CD8-positive, alpha-beta T cell (primary cell): ENCODE measurements at regions of chr19 and their contacts with region 1.

Region 1: GRCh38 chr19:6110360-6110977 is at the start of gene RFX2:
- DNase-seq: peak; percentile 98 to 99 (median 99)
- ATAC-seq: peak; percentile 97
- H3K4me3 ChIP-seq: peak within 1 kb of the TSS; percentile 59
- H3K4me3 Mint-ChIP-seq: peak within 1 kb of the TSS; percentile 89
- H3K27ac ChIP-seq: peak within 1 kb of the TSS; percentile 52 to 58
- H3K27ac Mint-ChIP-seq: peak within 1 kb of the TSS; percentile 80
- H3K4me1 ChIP-seq: peaks cover 14% of the 10 kb centered on the region
- H3K4me1 Mint-ChIP-seq: peaks cover 17% of the 10 kb centered on the region
- H3K27me3 ChIP-seq: peaks cover 0 to 13% of the 10 kb centered on the region in 2 experiments
- H3K27me3 Mint-ChIP-seq: peaks cover 3% of the 10 kb centered on the region
- CTCF ChIP-seq: no peak
- total RNA-seq, gene RFX2: 9.0 to 12.4 TPM

Region 2: GRCh38 chr19:5827891-5828660 is 282.4 kb before region 1 on chr19:
- CTCF ChIA-PET with region 1: no interaction called
- POLR2A ChIA-PET with region 1: no interaction called
- intact Hi-C with region 1: loop called in 1 of 2 experiments (anchors 1 kb)
- DNase-seq: peak; percentile 82 to 98 (median 90)
- ATAC-seq: peak; percentile 82
- H3K4me3 ChIP-seq: peak overlapping the region; percentile 56 to 70
- H3K4me3 Mint-ChIP-seq: peak overlapping the region; percentile 97
- H3K27ac ChIP-seq: peak overlapping the region; percentile 62 to 70
- H3K27ac Mint-ChIP-seq: peak overlapping the region; percentile 98
- H3K4me1 ChIP-seq: peaks cover 23% of the 10 kb centered on the region
- H3K4me1 Mint-ChIP-seq: peaks cover 15% of the 10 kb centered on the region
- H3K27me3 ChIP-seq: peaks cover 0 to 4% of the 10 kb centered on the region in 2 experiments
- H3K27me3 Mint-ChIP-seq: peaks cover 2% of the 10 kb centered on the region
- CTCF ChIP-seq: no peak

Region 3: GRCh38 chr19:5977785-5978605 is 132.5 kb before region 1 on chr19 and contains the start of gene RANBP3:
- CTCF ChIA-PET with region 1: no interaction called
- POLR2A ChIA-PET with region 1: no interaction called
- intact Hi-C with region 1: loop called in 1 of 2 experiments (anchors 2 kb)
- DNase-seq: peak; percentile 94 to 100 (median 99)
- ATAC-seq: peak; percentile 88
- H3K4me3 ChIP-seq: peak within 1 kb of the TSS; percentile 65 to 91
- H3K4me3 Mint-ChIP-seq: peak within 1 kb of the TSS; percentile 96
- H3K27ac ChIP-seq: peak within 1 kb of the TSS; percentile 83 to 85
- H3K27ac Mint-ChIP-seq: peak within 1 kb of the TSS; percentile 95
- H3K4me1 ChIP-seq: peaks cover 50% of the 10 kb centered on the region
- H3K4me1 Mint-ChIP-seq: peaks cover 56% of the 10 kb centered on the region
- H3K27me3 ChIP-seq: no peaks in the 10 kb centered on the region
- H3K27me3 Mint-ChIP-seq: no peaks in the 10 kb centered on the region
- CTCF ChIP-seq: no peak
- total RNA-seq, gene RANBP3: 109 to 118 TPM

Region 4: GRCh38 chr19:6056801-6057650 is 53.4 kb before region 1 on chr19:
- CTCF ChIA-PET with region 1: no interaction called
- POLR2A ChIA-PET with region 1: no interaction called
- intact Hi-C with region 1: loop called in 1 of 2 experiments (anchors 5 kb)
- DNase-seq: peak in 2 of 9 experiments; percentile 27 to 49
- ATAC-seq: no peak
- H3K4me3 ChIP-seq: no peak overlapping the region
- H3K4me3 Mint-ChIP-seq: no peak overlapping the region
- H3K27ac ChIP-seq: no peak overlapping the region
- H3K27ac Mint-ChIP-seq: no peak overlapping the region
- H3K4me1 ChIP-seq: peaks cover 17% of the 10 kb centered on the region
- H3K4me1 Mint-ChIP-seq: peaks cover 25% of the 10 kb centered on the region
- H3K27me3 ChIP-seq: no peaks in the 10 kb centered on the region
- H3K27me3 Mint-ChIP-seq: no peaks in the 10 kb centered on the region
- CTCF ChIP-seq: no peak

Region 5: GRCh38 chr19:6087074-6087571 is 23.3 kb before region 1 on chr19:
- CTCF ChIA-PET with region 1: no interaction called
- POLR2A ChIA-PET with region 1: interaction called, 3 read pairs
- intact Hi-C with region 1: loop called in 1 of 2 experiments (anchors 2 kb)
- DNase-seq: peak in 6 of 9 experiments; percentile 49 to 72 (median 56)
- ATAC-seq: peak; percentile 81
- H3K4me3 ChIP-seq: peak overlapping the region; percentile 12 to 14
- H3K4me3 Mint-ChIP-seq: peak overlapping the region; percentile 80
- H3K27ac ChIP-seq: peak overlapping the region; percentile 24 to 32
- H3K27ac Mint-ChIP-seq: peak overlapping the region; percentile 92
- H3K4me1 ChIP-seq: peaks cover 25% of the 10 kb centered on the region
- H3K4me1 Mint-ChIP-seq: peaks cover 26% of the 10 kb centered on the region
- H3K27me3 ChIP-seq: no peaks in the 10 kb centered on the region
- H3K27me3 Mint-ChIP-seq: no peaks in the 10 kb centered on the region
- CTCF ChIP-seq: no peak

Region 6: DNA sequence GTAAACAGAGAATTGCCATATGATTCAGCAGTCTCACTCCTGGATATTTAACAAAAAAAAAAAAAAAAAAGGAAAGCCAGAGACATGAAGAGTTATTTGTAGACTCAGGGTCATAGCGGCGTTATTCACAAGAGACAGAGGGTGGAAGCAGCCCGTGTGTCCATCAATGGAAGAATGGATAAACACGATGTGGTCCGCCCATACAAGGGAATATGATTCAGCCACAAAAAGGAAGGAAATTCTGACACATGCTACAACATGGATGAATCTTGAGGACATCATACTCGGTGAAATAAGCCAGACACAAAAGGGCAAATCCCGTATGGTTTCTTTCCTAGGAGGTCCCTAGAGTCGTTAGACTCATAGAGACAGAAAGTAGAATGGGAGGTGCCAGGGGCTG is 39.8 kb after region 1 on chr19:
- CTCF ChIA-PET with region 1: no interaction called
- POLR2A ChIA-PET with region 1: no interaction called
- intact Hi-C with region 1: no loop called
- DNase-seq: no peak
- ATAC-seq: no peak
- H3K4me3 ChIP-seq: no peak overlapping the region
- H3K4me3 Mint-ChIP-seq: no peak overlapping the region
- H3K27ac ChIP-seq: no peak overlapping the region
- H3K27ac Mint-ChIP-seq: no peak overlapping the region
- H3K4me1 ChIP-seq: no peaks in the 10 kb centered on the region
- H3K4me1 Mint-ChIP-seq: no peaks in the 10 kb centered on the region
- H3K27me3 ChIP-seq: peaks cover 0 to 3% of the 10 kb centered on the region in 2 experiments
- H3K27me3 Mint-ChIP-seq: peaks cover 1% of the 10 kb centered on the region
- CTCF ChIP-seq: no peak

Region 7: DNA sequence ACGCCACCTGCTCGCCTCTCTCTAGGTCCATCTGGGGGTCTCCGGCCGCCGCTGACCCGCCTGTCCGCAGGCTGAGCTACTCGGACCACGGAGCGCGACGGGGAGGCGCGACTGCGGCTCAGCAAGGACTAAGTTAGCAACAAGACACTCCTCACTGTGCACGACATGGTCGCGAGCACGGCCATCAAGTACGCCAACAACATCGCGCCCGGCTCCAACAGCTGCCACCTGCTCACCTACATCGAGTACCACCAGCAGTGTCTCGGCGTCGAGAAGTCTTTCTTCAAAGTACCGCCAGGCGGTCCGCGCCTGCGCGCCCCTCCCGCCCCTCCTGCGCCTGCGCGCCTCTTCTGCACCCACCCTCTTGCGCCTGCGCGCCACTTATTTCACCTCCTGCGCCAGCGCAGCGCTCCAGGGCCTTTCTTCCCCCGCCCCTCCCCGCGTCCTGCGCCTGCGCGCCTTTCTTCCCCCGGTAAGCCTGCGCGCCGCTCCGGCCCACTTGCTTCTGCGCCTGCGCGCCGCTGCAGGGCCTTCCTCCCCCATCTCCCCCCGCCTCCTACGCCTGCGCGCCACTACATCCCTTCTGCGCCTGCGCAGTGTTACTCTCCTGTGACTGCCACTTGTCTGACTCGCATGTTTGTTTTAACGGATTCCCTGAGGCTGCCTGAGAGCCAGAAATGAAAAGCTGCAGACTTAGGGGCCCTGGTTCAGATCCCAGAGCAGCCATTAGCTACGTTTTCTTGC is 88.9 kb after region 1 on chr19:
- CTCF ChIA-PET with region 1: no interaction called
- POLR2A ChIA-PET with region 1: no interaction called
- intact Hi-C with region 1: loop called in 1 of 2 experiments (anchors 2 kb)
- DNase-seq: peak; percentile 98 to 100 (median 100)
- ATAC-seq: peak; percentile 90
- H3K4me3 ChIP-seq: peak overlapping the region; percentile 80 to 99
- H3K4me3 Mint-ChIP-seq: peak overlapping the region; percentile 94
- H3K27ac ChIP-seq: peak overlapping the region; percentile 65 to 73
- H3K27ac Mint-ChIP-seq: peak overlapping the region; percentile 87
- H3K4me1 ChIP-seq: peaks cover 11% of the 10 kb centered on the region
- H3K4me1 Mint-ChIP-seq: peaks cover 10% of the 10 kb centered on the region
- H3K27me3 ChIP-seq: no peaks in the 10 kb centered on the region
- H3K27me3 Mint-ChIP-seq: peaks cover 3% of the 10 kb centered on the region
- CTCF ChIP-seq: peak; percentile 51

Region 8: GRCh38 chr19:6424939-6425731 is 314.7 kb after region 1 on chr19:
- CTCF ChIA-PET with region 1: no interaction called
- POLR2A ChIA-PET with region 1: no interaction called
- intact Hi-C with region 1: loop called in 1 of 2 experiments (anchors 2 kb)
- DNase-seq: peak; percentile 97 to 100 (median 98)
- ATAC-seq: peak; percentile 82
- H3K4me3 ChIP-seq: peak overlapping the region; percentile 7 to 48
- H3K4me3 Mint-ChIP-seq: peak overlapping the region; percentile 78
- H3K27ac ChIP-seq: peak overlapping the region; percentile 39 to 92
- H3K27ac Mint-ChIP-seq: peak overlapping the region; percentile 93
- H3K4me1 ChIP-seq: peaks cover 35% of the 10 kb centered on the region
- H3K4me1 Mint-ChIP-seq: peaks cover 37% of the 10 kb centered on the region
- H3K27me3 ChIP-seq: no peaks in the 10 kb centered on the region
- H3K27me3 Mint-ChIP-seq: no peaks in the 10 kb centered on the region
- CTCF ChIP-seq: no peak